ENCODE measurements at regions of chr10 and their contacts with region 1.

Region 1: DNA sequence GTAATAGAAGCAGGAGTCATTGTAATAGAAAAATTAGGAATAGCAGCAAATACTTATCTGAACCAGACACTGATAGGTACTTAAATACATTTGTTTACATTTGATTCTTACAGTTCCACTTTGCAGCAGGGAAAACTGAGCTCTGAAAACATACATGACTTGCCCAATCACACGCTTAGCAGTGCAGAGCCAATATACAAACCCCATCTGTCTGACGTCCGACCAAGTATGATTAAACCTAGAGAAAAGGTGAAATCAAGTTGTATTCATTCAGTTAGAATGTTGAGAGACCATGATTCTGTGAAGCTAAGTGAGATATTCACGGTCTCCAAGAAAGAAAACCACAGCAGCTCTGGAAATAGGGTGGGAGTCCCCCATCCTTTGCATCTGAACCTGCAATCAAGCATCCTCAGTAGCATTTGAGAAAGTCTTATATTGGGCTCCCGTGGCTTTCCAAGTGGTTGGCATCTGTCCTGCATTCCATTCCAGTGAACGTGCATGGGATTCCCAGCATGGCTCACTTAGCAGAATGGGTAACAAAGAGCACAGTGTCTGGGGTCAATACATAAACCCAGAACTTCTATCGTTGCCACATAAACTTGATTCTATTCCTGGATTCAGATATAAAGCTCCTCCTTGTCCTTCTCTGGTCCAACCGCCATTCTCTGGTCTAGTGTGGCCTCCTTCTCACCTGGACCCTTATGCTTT is 148.7 kb upstream of the RSU1 start:
- DNase-seq: peak; percentile 99
- ATAC-seq: peak; percentile 52
- H3K4me3 ChIP-seq: no peak overlapping the region
- H3K27ac ChIP-seq: peak overlapping the region; percentile 89
- H3K4me1 ChIP-seq: peaks cover 18% of the 10 kb centered on the region
- H3K27me3 ChIP-seq: no peaks in the 10 kb centered on the region
- CTCF ChIP-seq: no peak
- POLR2A ChIP-seq: no peak
- RAD21 ChIP-seq: no peak

Region 2: DNA sequence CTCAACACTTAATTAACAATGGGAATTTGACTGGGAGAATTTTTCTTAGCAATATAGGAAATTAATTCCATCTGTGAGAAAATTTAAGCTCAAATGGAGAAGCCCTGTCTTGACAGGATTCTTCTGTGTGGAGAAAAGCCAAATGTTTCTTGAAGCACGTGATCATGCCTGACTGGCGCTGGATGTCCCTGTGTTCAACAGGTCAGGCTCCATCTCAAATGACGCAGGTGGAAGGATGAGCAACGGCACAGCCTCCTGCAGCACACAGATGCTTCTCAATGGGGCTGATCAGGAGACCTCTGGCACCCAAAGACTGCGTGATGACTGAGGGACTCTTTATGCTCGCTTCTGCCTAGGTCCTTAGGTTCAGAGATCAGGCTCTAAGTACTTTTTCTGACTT is 292.5 kb before region 1 on chr10:
- CTCF ChIA-PET with region 1: no interaction called
- POLR2A ChIA-PET with region 1: no interaction called
- dilution Hi-C with region 1: no loop called
- in situ Hi-C with region 1: no loop called
- intact Hi-C with region 1: no loop called
- DNase-seq: no peak
- ATAC-seq: no peak
- H3K4me3 ChIP-seq: no peak overlapping the region
- H3K27ac ChIP-seq: no peak overlapping the region
- H3K4me1 ChIP-seq: no peaks in the 10 kb centered on the region
- H3K27me3 ChIP-seq: no peaks in the 10 kb centered on the region
- CTCF ChIP-seq: no peak
- POLR2A ChIP-seq: no peak
- RAD21 ChIP-seq: no peak

Region 3: DNA sequence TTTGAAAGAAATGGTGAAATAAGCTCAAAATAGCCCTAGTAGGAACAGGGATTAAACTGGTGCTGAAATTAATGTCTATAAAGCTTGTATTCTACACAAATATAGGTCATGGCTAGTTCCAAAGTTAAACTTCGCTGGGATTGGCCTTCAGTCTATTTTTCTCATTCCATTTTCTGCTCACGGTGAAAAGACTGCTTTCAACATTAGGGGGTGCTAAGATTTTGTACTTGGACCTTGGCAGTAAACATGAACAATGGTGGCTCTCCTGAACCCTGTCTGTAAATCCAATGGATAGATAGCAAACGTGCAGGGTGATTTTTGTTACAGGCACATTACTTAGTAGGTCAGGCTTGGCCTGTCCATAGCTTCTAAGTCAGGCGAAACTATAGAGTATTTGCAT is 112.7 kb before region 1 on chr10:
- CTCF ChIA-PET with region 1: interaction called, 8 read pairs
- POLR2A ChIA-PET with region 1: interaction called, 8 read pairs
- dilution Hi-C with region 1: no loop called
- in situ Hi-C with region 1: no loop called
- intact Hi-C with region 1: loop called (anchors 2 kb)
- DNase-seq: peak; percentile 68
- ATAC-seq: peak; percentile 80
- H3K4me3 ChIP-seq: no peak overlapping the region
- H3K27ac ChIP-seq: no peak overlapping the region
- H3K4me1 ChIP-seq: peaks cover 3% of the 10 kb centered on the region
- H3K27me3 ChIP-seq: no peaks in the 10 kb centered on the region
- CTCF ChIP-seq: peak; percentile 76
- POLR2A ChIP-seq: no peak
- RAD21 ChIP-seq: peak; percentile 82

Region 4: DNA sequence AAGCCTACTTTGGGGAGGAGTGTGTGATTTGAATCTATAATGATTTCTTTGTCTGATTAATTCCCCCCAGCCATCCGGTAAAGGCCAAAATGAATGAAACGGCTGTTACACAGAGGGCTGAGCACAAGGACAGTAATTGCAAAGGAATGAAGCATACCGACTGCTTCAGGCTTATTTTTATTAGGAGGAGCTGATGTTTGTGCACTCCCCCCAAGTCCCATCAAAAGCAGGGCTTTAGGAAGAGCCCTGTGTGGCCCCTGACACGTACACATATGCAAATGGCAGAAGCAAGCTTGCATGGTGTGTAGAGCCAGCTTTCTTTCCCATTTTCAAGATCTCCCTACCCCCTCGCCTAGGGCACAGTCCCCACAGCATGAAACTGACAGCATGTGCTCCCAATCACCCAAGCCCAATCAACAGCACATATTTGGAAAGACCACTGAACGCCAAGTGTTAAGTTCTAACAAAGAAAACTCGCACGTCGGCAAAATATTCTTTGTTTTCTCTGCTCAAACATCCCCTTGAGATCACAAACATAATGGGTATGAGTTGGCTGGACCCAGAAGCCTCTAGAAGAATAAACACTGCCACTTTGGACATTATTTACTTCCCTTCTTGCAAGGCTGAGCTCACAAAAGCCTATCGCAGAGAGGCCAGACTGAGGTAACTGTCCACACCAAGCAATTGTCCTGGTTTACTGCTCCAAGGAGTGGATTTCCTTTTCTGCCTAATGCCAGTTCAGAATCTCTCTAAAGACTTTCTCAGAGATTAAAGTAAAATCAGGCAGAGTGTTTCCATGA is 20.7 kb after region 1 on chr10:
- CTCF ChIA-PET with region 1: interaction called, 5 read pairs
- POLR2A ChIA-PET with region 1: interaction called, 21 read pairs
- dilution Hi-C with region 1: no loop called
- in situ Hi-C with region 1: no loop called
- intact Hi-C with region 1: loop called (anchors 1 kb)
- DNase-seq: peak; percentile 88
- ATAC-seq: peak; percentile 92
- H3K4me3 ChIP-seq: no peak overlapping the region
- H3K27ac ChIP-seq: peak overlapping the region; percentile 95
- H3K4me1 ChIP-seq: peaks cover 25% of the 10 kb centered on the region
- H3K27me3 ChIP-seq: no peaks in the 10 kb centered on the region
- CTCF ChIP-seq: no peak
- POLR2A ChIP-seq: no peak
- RAD21 ChIP-seq: peak; percentile 22; the same call in 1 of the 2 replicates

Region 5: GRCh38 chr10:17062955-17063484 is 97.1 kb after region 1 on chr10:
- CTCF ChIA-PET with region 1: no interaction called
- POLR2A ChIA-PET with region 1: interaction called, 3 read pairs
- dilution Hi-C with region 1: no loop called
- in situ Hi-C with region 1: no loop called
- intact Hi-C with region 1: loop called (anchors 2 kb)
- DNase-seq: peak; percentile 86
- ATAC-seq: peak; percentile 55
- H3K4me3 ChIP-seq: no peak overlapping the region
- H3K27ac ChIP-seq: peak overlapping the region; percentile 68
- H3K4me1 ChIP-seq: peaks cover 19% of the 10 kb centered on the region
- H3K27me3 ChIP-seq: no peaks in the 10 kb centered on the region
- CTCF ChIP-seq: no peak
- POLR2A ChIP-seq: 0 out of 2 replicates have a peak, but pooled peaks have one; percentile 45
- RAD21 ChIP-seq: peak; percentile 39

Region 6: GRCh38 chr10:17200912-17201793 is 235.3 kb after region 1 on chr10 and contains the start of gene TRDMT1:
- CTCF ChIA-PET with region 1: no interaction called
- POLR2A ChIA-PET with region 1: no interaction called
- dilution Hi-C with region 1: no loop called
- in situ Hi-C with region 1: no loop called
- intact Hi-C with region 1: loop called (anchors 2 kb)
- DNase-seq: peak; percentile 86
- ATAC-seq: peak; percentile 98
- H3K4me3 ChIP-seq: peak within 1 kb of the TSS; percentile 74
- H3K27ac ChIP-seq: peak within 1 kb of the TSS; percentile 93
- H3K4me1 ChIP-seq: peaks cover 6% of the 10 kb centered on the region; the same call in 1 of the 2 replicates
- H3K27me3 ChIP-seq: no peaks in the 10 kb centered on the region
- CTCF ChIP-seq: no peak
- POLR2A ChIP-seq: peak; percentile 83
- RAD21 ChIP-seq: peak; percentile 34
- total RNA-seq, gene TRDMT1: 4.7 and 6.7 TPM in 2 replicates

Region 7: DNA sequence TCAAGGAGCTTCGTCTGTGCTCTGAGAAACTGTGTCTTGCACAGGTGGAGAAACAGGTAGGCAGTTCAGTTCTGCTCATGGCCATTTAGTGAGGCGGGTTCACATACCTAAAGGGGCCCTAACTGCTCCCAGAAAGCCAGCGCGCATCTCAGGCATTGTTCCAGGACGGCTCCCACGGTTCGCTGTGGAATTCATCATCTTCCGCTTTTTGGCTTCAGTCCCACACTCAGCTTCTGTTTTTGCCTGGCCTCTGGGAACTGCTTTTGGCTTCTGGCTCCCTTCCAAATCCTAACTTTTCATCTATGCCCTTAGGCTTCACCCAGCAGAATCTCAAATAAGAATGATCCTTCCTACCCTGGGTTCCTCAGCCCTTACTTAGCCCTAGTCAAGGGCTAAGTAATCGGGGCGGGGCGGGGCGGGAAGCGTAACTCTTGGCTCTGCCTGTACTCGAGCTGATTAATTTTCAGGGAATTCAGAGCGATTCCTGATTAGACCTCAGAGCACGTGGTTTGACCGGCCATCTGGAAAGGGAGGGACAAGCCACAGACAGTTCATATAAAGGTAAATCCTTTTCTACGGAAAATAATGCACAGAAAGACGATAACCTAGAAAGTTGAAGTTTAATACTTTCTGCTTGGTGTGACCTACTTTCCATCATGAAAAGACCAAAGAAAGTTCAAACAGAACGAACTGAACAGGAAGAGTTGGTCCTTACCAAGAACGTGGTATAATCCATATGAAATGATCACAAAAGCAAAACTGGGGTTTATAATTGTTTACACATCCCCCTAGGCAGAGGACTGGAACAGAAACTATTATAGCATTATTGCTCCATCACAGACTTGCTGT is 382.8 kb after region 1 on chr10:
- CTCF ChIA-PET with region 1: no interaction called
- POLR2A ChIA-PET with region 1: no interaction called
- dilution Hi-C with region 1: no loop called
- in situ Hi-C with region 1: no loop called
- intact Hi-C with region 1: no loop called
- DNase-seq: peak; percentile 79
- ATAC-seq: peak; percentile 98
- H3K4me3 ChIP-seq: peak overlapping the region; percentile 7; the same call in 1 of the 2 replicates
- H3K27ac ChIP-seq: no peak overlapping the region
- H3K4me1 ChIP-seq: peaks cover 4% of the 10 kb centered on the region; the same call in 1 of the 2 replicates
- H3K27me3 ChIP-seq: peaks cover 2% of the 10 kb centered on the region
- CTCF ChIP-seq: no peak
- POLR2A ChIP-seq: no peak
- RAD21 ChIP-seq: no peak

Region 8: GRCh38 chr10:17586821-17587234 is 620.9 kb after region 1 on chr10:
- CTCF ChIA-PET with region 1: no interaction called
- POLR2A ChIA-PET with region 1: no interaction called
- dilution Hi-C with region 1: no loop called
- in situ Hi-C with region 1: no loop called
- intact Hi-C with region 1: no loop called
- DNase-seq: peak; percentile 43
- ATAC-seq: peak; percentile 44
- H3K4me3 ChIP-seq: no peak overlapping the region
- H3K27ac ChIP-seq: no peak overlapping the region
- H3K4me1 ChIP-seq: peaks cover 3% of the 10 kb centered on the region; the same call in 1 of the 2 replicates
- H3K27me3 ChIP-seq: no peaks in the 10 kb centered on the region
- CTCF ChIP-seq: no peak
- POLR2A ChIP-seq: no peak
- RAD21 ChIP-seq: no peak